Vagina (tissue), 2 donors: ENCODE measurements at regions of chr11 and their contacts with region 1.

Region 1: DNA sequence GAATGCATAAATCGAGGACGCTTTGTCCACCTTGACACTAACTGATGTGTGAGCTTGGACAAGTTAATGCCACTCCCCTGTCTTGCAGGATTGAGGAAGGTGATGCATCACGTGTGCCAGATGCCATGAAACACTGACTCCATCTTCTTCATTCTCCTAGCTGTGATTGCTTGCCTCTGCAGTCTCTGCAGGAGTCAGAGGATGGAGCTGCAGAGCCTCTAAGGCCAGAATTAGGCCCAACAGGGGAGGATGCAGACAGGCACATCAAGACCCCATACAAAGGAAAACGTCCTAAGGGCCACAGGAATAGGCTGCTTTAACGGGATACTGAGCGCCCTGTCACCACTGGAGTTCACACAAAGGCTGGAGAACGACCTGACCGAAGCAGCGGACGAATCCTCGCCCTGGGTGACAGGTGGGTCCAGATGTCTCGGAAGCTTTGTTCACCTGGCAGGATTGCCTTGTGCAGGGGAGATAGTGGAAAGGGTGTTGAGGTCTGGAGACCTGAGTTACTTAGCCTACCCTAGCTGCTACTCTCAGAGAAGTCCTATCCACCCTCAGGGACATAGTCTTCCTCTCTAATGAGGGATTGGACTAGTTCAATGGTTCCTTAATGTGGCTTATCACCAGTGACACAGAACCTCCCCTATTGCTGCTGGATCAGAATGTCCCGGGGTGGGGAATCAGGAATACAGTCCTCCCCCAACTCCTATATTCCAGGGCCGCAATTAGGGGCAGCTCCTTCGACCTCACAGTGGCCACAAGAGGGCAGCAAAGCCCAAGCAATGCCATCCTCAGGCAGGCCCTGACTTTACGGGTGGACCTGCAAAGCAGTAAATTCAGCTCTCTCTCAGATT is 32.4 kb downstream of the DBX1 start:
- DNase-seq: no peak
- H3K4me3 ChIP-seq: no peak overlapping the region
- H3K27ac ChIP-seq: no peak overlapping the region
- H3K4me1 ChIP-seq: peaks cover 5% of the 10 kb centered on the region
- H3K27me3 ChIP-seq: no peaks in the 10 kb centered on the region
- CTCF ChIP-seq: peak; percentile 62 to 80 (median 68)
- POLR2A ChIP-seq: no peak

Region 2: DNA sequence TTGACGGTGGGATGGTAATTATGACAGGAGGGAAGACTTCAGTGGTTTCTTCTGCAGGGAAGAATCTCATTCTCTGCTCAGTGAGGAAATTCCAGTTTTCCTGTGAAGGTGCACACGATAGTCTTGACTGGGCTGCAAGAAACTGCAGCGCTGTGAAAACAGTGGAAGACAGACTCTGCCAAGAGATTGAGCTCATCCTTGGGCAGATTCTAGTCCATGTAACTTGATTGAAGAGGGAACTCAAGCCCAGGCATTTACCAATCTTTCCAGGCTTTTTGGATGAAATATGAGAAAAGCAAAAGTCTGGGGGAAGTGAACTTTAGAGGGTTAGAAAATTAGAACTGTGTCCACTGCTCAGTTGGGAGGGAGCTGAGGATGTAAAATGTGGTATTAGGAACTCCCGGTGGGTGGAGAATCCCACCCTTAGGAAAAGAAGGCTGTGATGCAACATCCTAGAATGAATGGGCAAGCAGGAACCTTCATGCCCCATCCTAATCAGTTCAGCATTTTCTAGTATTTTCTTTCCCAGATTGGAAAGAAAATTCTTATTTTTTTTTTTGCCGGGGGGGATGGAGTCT is 180.3 kb before region 1 on chr11:
- intact Hi-C with region 1: loop called (anchors 5 kb)
- DNase-seq: peak; percentile 8 to 16
- H3K4me3 ChIP-seq: no peak overlapping the region
- H3K27ac ChIP-seq: no peak overlapping the region
- H3K4me1 ChIP-seq: no peaks in the 10 kb centered on the region
- H3K27me3 ChIP-seq: no peaks in the 10 kb centered on the region
- CTCF ChIP-seq: no peak
- POLR2A ChIP-seq: no peak